Activated B cell treated with CpG ODN at 0.5 μM for 24 hours (primary cell): ENCODE measurements at regions of chr7 and their contacts with region 1.

Region 1: GRCh38 chr7:47254081-47255006 is 327.6 kb downstream of the TNS3 start:
- DNase-seq: peak; percentile 76
- ATAC-seq: peak; percentile 92
- H3K4me3 Mint-ChIP-seq: peak overlapping the region; percentile 80
- H3K27ac Mint-ChIP-seq: peak overlapping the region; percentile 50
- H3K4me1 Mint-ChIP-seq: peaks cover 23% of the 10 kb centered on the region
- H3K27me3 Mint-ChIP-seq: no peaks in the 10 kb centered on the region
- CTCF ChIP-seq: peak; percentile 92

Region 2: DNA sequence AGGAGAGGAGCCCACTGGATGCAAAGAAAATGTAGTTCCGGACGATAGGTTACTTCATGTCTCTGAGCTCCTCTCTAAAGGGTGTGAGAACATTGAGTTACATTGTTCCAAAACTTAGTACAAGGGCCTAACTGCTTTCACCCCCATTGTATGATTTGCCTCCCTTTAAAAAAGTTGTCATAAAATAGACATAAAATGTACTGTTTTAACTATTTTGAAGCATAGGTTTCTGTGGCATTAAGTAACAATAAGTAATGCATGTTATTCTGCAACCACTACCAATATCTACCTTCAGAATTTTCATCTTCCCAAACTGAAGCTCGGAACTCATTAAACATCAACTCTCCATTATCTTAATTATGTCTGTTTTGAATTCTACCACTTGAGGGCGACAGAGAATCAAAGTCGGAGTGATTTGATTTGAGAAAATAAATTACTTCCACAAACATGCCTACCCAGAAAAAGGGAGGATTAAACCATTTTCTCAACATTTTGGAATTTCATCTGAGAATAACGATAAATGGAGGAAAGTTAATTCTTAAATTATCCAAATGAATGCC is 1363.4 kb before region 1 on chr7:
- CTCF ChIA-PET with region 1: no interaction called
- POLR2A ChIA-PET with region 1: no interaction called
- intact Hi-C with region 1: loop called (anchors 1 kb)
- DNase-seq: no peak
- ATAC-seq: no peak
- H3K4me3 Mint-ChIP-seq: no peak overlapping the region
- H3K27ac Mint-ChIP-seq: no peak overlapping the region
- H3K4me1 Mint-ChIP-seq: no peaks in the 10 kb centered on the region
- H3K27me3 Mint-ChIP-seq: peaks cover 55% of the 10 kb centered on the region
- CTCF ChIP-seq: peak; percentile 78

Region 3: DNA sequence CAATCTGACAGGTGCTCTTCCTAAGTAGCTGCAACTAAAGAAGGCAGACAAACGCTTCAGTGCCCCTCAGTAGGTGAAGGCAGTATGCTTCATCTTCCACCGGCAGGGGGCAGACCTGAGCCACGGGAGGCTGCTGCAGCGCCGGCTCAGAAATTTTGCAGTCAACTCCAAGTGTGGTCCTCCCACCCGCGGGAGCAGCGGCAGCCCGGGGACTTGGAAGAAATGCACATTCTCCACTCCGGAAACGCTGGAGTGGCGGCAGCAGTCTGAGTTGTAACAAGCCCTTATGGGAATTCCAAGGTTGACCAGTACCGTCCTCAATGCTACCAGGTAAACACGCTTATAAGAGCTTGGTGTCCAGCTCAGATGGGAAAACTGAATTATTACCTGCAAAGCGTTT is 1336.7 kb before region 1 on chr7:
- CTCF ChIA-PET with region 1: interaction called, 12 read pairs
- POLR2A ChIA-PET with region 1: no interaction called
- intact Hi-C with region 1: loop called (anchors 1 kb)
- DNase-seq: peak; percentile 62
- ATAC-seq: peak; percentile 57
- H3K4me3 Mint-ChIP-seq: no peak overlapping the region
- H3K27ac Mint-ChIP-seq: no peak overlapping the region
- H3K4me1 Mint-ChIP-seq: peaks cover 11% of the 10 kb centered on the region
- H3K27me3 Mint-ChIP-seq: peaks cover 55% of the 10 kb centered on the region
- CTCF ChIP-seq: no peak

Region 4: DNA sequence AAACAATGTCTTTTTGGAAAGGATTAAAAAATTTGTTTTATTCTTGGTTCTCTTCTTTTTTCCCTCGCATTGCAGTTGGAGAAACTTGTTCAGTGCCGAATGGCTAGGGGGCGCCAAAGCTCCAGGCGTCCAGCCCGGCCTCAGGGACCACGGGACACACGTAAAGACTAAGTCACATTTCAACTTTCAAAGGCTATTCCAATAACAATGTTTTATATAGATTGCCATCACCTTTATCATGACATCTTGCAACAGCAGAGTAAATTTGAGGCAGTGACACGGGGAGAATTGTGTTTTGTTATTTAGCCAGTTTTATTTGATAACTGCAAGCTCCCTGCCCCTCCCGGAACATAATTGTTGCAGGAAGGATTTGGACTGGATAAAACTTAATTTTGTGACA is 1331.1 kb before region 1 on chr7:
- CTCF ChIA-PET with region 1: interaction called, 12 read pairs
- POLR2A ChIA-PET with region 1: no interaction called
- intact Hi-C with region 1: loop called (anchors 1 kb)
- DNase-seq: no peak
- ATAC-seq: no peak
- H3K4me3 Mint-ChIP-seq: no peak overlapping the region
- H3K27ac Mint-ChIP-seq: no peak overlapping the region
- H3K4me1 Mint-ChIP-seq: peaks cover 20% of the 10 kb centered on the region
- H3K27me3 Mint-ChIP-seq: peaks cover 48% of the 10 kb centered on the region
- CTCF ChIP-seq: no peak

Region 5: GRCh38 chr7:46776790-46777189 is 477.6 kb before region 1 on chr7:
- CTCF ChIA-PET with region 1: no interaction called
- POLR2A ChIA-PET with region 1: no interaction called
- intact Hi-C with region 1: loop called (anchors 2 kb)
- DNase-seq: no peak
- ATAC-seq: no peak
- H3K4me3 Mint-ChIP-seq: no peak overlapping the region
- H3K27ac Mint-ChIP-seq: no peak overlapping the region
- H3K4me1 Mint-ChIP-seq: no peaks in the 10 kb centered on the region
- H3K27me3 Mint-ChIP-seq: peaks cover 1% of the 10 kb centered on the region
- CTCF ChIP-seq: no peak

Region 6: GRCh38 chr7:47066971-47067614 is 187.3 kb before region 1 on chr7:
- CTCF ChIA-PET with region 1: no interaction called
- POLR2A ChIA-PET with region 1: no interaction called
- intact Hi-C with region 1: no loop called
- DNase-seq: no peak
- ATAC-seq: no peak
- H3K4me3 Mint-ChIP-seq: no peak overlapping the region
- H3K27ac Mint-ChIP-seq: no peak overlapping the region
- H3K4me1 Mint-ChIP-seq: no peaks in the 10 kb centered on the region
- H3K27me3 Mint-ChIP-seq: peaks cover 24% of the 10 kb centered on the region
- CTCF ChIP-seq: no peak

Region 7: GRCh38 chr7:47088329-47089067 is 165.8 kb before region 1 on chr7:
- CTCF ChIA-PET with region 1: no interaction called
- POLR2A ChIA-PET with region 1: no interaction called
- intact Hi-C with region 1: loop called (anchors 10 kb)
- DNase-seq: no peak
- ATAC-seq: peak; percentile 60
- H3K4me3 Mint-ChIP-seq: no peak overlapping the region
- H3K27ac Mint-ChIP-seq: no peak overlapping the region
- H3K4me1 Mint-ChIP-seq: peaks cover 3% of the 10 kb centered on the region
- H3K27me3 Mint-ChIP-seq: peaks cover 5% of the 10 kb centered on the region
- CTCF ChIP-seq: peak; percentile 79

Region 8: DNA sequence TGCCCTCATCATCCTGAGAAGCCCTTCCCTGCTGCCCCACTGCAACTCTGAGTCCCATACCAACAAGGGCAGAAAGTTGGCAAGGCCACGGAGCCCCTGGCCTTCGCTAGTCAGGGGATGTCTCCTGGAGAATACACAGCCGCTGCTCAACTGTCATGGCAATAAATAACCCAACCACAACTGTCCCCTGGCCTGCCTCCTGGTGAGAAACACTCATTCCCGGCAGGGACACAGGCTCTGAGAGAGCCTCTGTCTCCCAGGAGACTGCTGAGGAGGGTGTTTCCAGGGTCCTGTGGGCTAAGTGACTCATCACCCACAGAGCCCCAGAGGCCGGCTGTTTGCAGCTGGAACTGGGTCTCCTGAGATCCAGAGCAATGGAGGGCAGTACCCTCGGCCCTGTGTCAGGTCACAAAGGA is 26.6 kb before region 1 on chr7:
- CTCF ChIA-PET with region 1: no interaction called
- POLR2A ChIA-PET with region 1: no interaction called
- intact Hi-C with region 1: loop called (anchors 1 kb)
- DNase-seq: peak; percentile 24
- ATAC-seq: peak; percentile 73
- H3K4me3 Mint-ChIP-seq: no peak overlapping the region
- H3K27ac Mint-ChIP-seq: no peak overlapping the region
- H3K4me1 Mint-ChIP-seq: peaks cover 27% of the 10 kb centered on the region
- H3K27me3 Mint-ChIP-seq: peaks cover 6% of the 10 kb centered on the region
- CTCF ChIP-seq: no peak

Region 9: GRCh38 chr7:47852330-47853245 is 598.2 kb after region 1 on chr7:
- CTCF ChIA-PET with region 1: no interaction called
- POLR2A ChIA-PET with region 1: no interaction called
- intact Hi-C with region 1: no loop called
- DNase-seq: no peak
- ATAC-seq: peak; percentile 40
- H3K4me3 Mint-ChIP-seq: no peak overlapping the region
- H3K27ac Mint-ChIP-seq: no peak overlapping the region
- H3K4me1 Mint-ChIP-seq: no peaks in the 10 kb centered on the region
- H3K27me3 Mint-ChIP-seq: no peaks in the 10 kb centered on the region
- CTCF ChIP-seq: no peak